Motor neuron (in vitro differentiated cells): ENCODE measurements at regions of chr4 and their contacts with region 1.

Region 1: GRCh38 chr4:42568610-42569207 is 88.2 kb downstream of the ATP8A1 start:
- ATAC-seq: peak; percentile 81 to 98 (median 92)
- H3K4me3 ChIP-seq: no peak overlapping the region
- H3K27ac ChIP-seq: no peak overlapping the region
- H3K4me1 ChIP-seq: no peaks in the 10 kb centered on the region

Region 2: DNA sequence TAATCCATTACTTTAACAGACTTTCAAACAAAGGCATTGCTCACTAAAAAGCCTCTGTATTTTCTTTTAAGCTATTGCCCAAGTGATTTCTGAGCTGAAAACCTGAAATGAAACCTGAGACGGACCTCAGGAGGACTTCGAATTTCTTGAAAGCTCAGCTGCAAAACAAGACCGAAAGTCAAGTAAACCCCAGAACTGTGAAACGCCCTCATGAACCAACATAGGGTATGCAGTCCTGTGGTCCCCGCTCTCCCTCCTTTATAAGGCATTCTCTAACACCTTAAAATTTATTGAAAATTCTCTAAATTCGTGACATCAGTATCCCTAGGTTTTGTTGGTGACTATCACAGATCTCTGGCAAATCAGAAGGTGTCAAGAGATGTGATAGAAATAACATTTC is 79.6 kb before region 1 on chr4:
- in situ Hi-C with region 1: no loop called
- ATAC-seq: no peak
- H3K4me3 ChIP-seq: no peak overlapping the region
- H3K27ac ChIP-seq: no peak overlapping the region
- H3K4me1 ChIP-seq: peaks cover 0 to 13% of the 10 kb centered on the region in 2 donors

Region 3: GRCh38 chr4:42865572-42866189 is 297.0 kb after region 1 on chr4:
- in situ Hi-C with region 1: loop called in 6 of 9 experiments (anchors 10 to 25 kb)
- ATAC-seq: peak in 3 of 8 experiments; percentile 74 to 75 (median 75)
- H3K4me3 ChIP-seq: no peak overlapping the region
- H3K27ac ChIP-seq: no peak overlapping the region
- H3K4me1 ChIP-seq: peaks cover 0 to 4% of the 10 kb centered on the region in 2 donors

Region 4: DNA sequence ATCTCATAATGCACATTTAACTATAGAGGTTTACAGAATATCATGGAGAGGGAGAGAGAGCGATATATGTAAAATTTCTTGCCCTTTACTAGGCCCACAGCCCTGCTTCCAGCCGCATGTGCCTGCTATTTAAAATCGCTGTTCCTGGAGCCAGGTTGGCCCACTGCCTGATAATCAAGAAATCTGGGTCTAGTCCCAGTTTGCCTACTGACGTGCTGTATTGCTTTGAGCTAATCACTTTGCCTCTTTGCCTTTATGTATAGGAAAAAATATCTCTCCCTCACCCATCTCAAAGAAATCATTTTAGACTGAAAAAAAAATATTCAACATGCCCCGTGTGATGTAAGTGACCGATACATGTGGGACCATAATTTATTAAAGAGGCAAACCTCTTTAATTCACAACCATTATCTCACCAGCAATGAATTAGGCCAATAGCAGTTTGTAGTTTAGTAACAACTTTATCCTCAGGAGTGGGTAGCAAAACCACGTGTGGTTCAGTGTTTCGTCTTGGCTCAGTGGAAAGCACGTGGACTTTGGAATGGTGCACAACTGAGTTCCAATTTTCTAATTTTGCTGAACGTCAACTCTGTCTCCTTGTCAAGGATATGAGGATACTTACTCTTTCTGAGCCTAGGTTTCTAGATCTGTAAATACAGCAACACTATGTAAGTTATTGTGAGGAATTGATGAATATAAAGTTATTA is 386.4 kb after region 1 on chr4:
- in situ Hi-C with region 1: loop called in 4 of 9 experiments (anchors 10 to 25 kb)
- ATAC-seq: peak in 4 of 8 experiments; percentile 36 to 61 (median 55)
- H3K4me3 ChIP-seq: no peak overlapping the region
- H3K27ac ChIP-seq: peak overlapping the region in 1 of 2 donors; percentile 74
- H3K4me1 ChIP-seq: peaks cover 4 to 29% of the 10 kb centered on the region in 2 donors

Region 5: DNA sequence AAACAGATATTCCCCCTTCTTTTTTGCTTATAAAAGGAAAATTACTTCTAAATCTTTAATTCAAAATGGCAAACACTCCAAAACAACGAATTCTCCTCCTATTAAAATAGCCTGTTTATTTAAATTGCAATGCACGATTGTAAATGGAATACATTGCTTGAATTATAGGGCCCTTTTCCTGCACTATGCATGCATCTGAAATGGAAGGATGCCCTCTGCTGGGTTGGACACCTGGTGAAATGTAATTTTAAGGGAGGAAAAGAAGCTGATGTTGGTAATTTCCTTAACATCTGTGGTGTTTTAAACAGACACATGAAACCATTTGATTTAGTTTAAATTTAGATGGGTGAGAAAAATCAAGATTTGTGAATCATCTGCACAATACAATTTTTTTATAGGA is 396.6 kb after region 1 on chr4:
- in situ Hi-C with region 1: loop called in 3 of 9 experiments (anchors 10 to 25 kb)
- ATAC-seq: peak in 4 of 8 experiments; percentile 44 to 59 (median 48)
- H3K4me3 ChIP-seq: no peak overlapping the region
- H3K27ac ChIP-seq: no peak overlapping the region
- H3K4me1 ChIP-seq: peaks cover 3 to 13% of the 10 kb centered on the region in 2 donors